ENCODE measurements at regions of chr4 and their contacts with region 1.

Region 1: GRCh38 chr4:107863850-107864371 is 39.2 kb downstream of the SGMS2 start:
- DNase-seq: no peak
- H3K4me3 ChIP-seq: no peak overlapping the region
- H3K27ac ChIP-seq: no peak overlapping the region
- H3K4me1 ChIP-seq: no peaks in the 10 kb centered on the region
- H3K27me3 ChIP-seq: no peaks in the 10 kb centered on the region
- CTCF ChIP-seq: no peak
- EP300 ChIP-seq: no peak
- POLR2A ChIP-seq: no peak

Region 2: GRCh38 chr4:107888237-107888636 is 24.3 kb after region 1 on chr4:
- intact Hi-C with region 1: loop called in 1 of 4 experiments (anchors 1 kb)
- DNase-seq: no peak
- H3K4me3 ChIP-seq: no peak overlapping the region
- H3K27ac ChIP-seq: no peak overlapping the region
- H3K4me1 ChIP-seq: no peaks in the 10 kb centered on the region
- H3K27me3 ChIP-seq: no peaks in the 10 kb centered on the region
- CTCF ChIP-seq: no peak
- EP300 ChIP-seq: no peak
- POLR2A ChIP-seq: no peak